Mammary epithelial cell (primary cell): ENCODE measurements at regions of chr3 and their contacts with region 1.

Region 1: GRCh38 chr3:132253262-132253878 is 63.8 kb upstream of the ACP3 start:
- DNase-seq: peak; percentile 47
- H3K4me3 ChIP-seq: no peak overlapping the region
- H3K27ac ChIP-seq: no peak overlapping the region
- H3K4me1 ChIP-seq: peaks cover 7% of the 10 kb centered on the region
- H3K27me3 ChIP-seq: no peaks in the 10 kb centered on the region
- CTCF ChIP-seq: peak; percentile 77 to 78

Region 2: GRCh38 chr3:132284781-132285619 is 31.6 kb after region 1 on chr3:
- CTCF ChIA-PET with region 1: no interaction called
- dilution Hi-C with region 1: loop called (anchors 5 kb)
- in situ Hi-C with region 1: no loop called
- intact Hi-C with region 1: no loop called
- DNase-seq: no peak
- H3K4me3 ChIP-seq: no peak overlapping the region
- H3K27ac ChIP-seq: no peak overlapping the region
- H3K4me1 ChIP-seq: peaks cover 7% of the 10 kb centered on the region
- H3K27me3 ChIP-seq: no peaks in the 10 kb centered on the region
- CTCF ChIP-seq: no peak

Region 3: GRCh38 chr3:132343018-132343612 is 89.7 kb after region 1 on chr3:
- CTCF ChIA-PET with region 1: no interaction called
- dilution Hi-C with region 1: loop called (anchors 5 kb)
- in situ Hi-C with region 1: loop called (anchors 5 kb)
- intact Hi-C with region 1: loop called (anchors 1 kb)
- DNase-seq: peak; percentile 41
- H3K4me3 ChIP-seq: no peak overlapping the region
- H3K27ac ChIP-seq: no peak overlapping the region
- H3K4me1 ChIP-seq: no peaks in the 10 kb centered on the region
- H3K27me3 ChIP-seq: no peaks in the 10 kb centered on the region
- CTCF ChIP-seq: peak; percentile 78 to 85